GM18951 (cell line): ENCODE measurements at regions of chr20 and their contacts with region 1.

Region 1: GRCh38 chr20:51326201-51326819 is 216.2 kb downstream of the NFATC2 start:
- POLR2A ChIP-seq: no peak

Region 2: DNA sequence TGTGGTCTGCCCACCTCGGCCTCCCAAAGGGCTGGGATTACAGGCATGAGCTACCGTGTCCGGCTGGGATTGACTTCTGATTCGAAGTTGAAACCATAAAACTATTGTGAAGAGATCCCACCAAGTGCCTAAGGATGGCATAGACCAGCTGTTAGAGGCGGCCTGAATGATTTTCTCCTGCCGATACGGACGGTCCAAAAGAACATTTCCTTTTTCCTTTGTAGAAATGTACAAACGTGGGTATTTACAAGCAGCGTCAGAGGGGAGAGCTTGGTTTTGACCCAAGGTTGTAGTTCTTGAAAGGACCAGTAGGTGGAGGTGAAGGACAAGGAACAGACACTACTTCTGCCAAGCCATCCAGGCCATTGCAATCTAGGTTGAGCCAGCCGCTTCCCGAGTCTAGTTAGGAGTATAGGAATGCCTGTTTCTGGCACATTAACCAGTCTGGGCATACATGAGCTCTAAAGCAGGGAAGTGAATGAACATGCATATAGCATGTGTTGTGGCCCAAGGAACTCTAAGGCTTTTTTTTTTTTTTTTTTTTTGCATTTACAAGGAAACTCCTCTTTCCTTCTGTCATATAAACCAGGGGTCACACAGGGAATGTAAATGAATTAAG is 338.6 kb before region 1 on chr20:
- in situ Hi-C with region 1: loop called (anchors 10 kb)
- POLR2A ChIP-seq: no peak